GM12878 (cell line): ENCODE measurements at regions of chr6 and their contacts with region 1.

Region 1: GRCh38 chr6:16332175-16332542 is 93.8 kb downstream of the GMPR start:
- DNase-seq: peak; percentile 78
- ATAC-seq: peak; percentile 99
- H3K4me3 ChIP-seq: no peak overlapping the region
- H3K27ac ChIP-seq: peak overlapping the region; percentile 13; the same call in 1 of the 2 replicates
- H3K4me1 ChIP-seq: peaks cover 19% of the 10 kb centered on the region
- H3K27me3 ChIP-seq: no peaks in the 10 kb centered on the region
- CTCF ChIP-seq: peak; percentile 77 to 95 (median 94); a peak in 5 of 6 replicates
- EP300 ChIP-seq: no peak
- POLR2A ChIP-seq: no peak
- RAD21 ChIP-seq: peak; percentile 99

Region 2: DNA sequence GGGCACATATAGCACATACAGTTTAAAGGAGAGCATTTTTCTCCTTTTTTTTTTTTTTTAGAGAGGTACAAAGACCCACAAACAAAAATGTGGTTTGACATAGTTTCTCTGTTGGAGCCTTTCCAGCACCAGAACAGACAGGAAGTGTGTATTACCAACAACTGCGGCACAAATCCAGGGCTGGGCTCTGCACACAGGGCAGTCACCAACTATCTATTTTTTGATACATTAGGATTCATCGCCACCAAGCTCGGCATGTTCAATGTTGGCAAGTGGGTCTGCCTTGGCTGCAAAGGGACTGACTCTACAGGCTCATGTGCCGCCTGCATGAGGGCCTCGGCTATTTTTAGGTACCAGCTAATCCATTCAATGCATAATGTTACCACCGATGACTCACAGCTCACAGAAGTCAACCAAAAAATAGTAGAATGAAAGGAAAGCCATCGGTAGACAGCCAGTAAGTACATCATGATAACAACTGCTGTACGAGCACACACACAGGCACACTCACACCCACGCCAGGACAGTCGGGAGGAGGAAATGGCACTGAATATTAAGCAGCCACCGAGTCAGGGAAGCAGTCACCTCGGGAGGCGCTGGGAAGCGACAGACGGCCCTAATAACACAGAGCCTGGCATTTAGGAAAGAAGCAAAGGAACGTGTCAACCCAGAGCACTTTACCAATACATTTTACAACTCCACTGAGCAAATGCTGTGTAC is 12.2 kb before region 1 on chr6:
- CTCF ChIA-PET with region 1: interaction called, 53 read pairs
- POLR2A ChIA-PET with region 1: no interaction called
- RAD21 ChIA-PET with region 1: interaction called, 5 read pairs
- SMC1A ChIA-PET with region 1: interaction called, 7 read pairs
- in situ Hi-C with region 1: no loop called
- intact Hi-C with region 1: no loop called
- DNase-seq: peak; percentile 59
- ATAC-seq: peak; percentile 90
- H3K4me3 ChIP-seq: peak overlapping the region; percentile 43
- H3K27ac ChIP-seq: peak overlapping the region; percentile 56
- H3K4me1 ChIP-seq: peaks cover 31% of the 10 kb centered on the region
- H3K27me3 ChIP-seq: no peaks in the 10 kb centered on the region
- CTCF ChIP-seq: no peak
- EP300 ChIP-seq: 0 out of 4 replicates have a peak, but pooled peaks of 1 of the 2 experiments have one; percentile 9
- POLR2A ChIP-seq: 0 out of 2 replicates have a peak, but pooled peaks have one; percentile 26
- RAD21 ChIP-seq: no peak

Region 3: DNA sequence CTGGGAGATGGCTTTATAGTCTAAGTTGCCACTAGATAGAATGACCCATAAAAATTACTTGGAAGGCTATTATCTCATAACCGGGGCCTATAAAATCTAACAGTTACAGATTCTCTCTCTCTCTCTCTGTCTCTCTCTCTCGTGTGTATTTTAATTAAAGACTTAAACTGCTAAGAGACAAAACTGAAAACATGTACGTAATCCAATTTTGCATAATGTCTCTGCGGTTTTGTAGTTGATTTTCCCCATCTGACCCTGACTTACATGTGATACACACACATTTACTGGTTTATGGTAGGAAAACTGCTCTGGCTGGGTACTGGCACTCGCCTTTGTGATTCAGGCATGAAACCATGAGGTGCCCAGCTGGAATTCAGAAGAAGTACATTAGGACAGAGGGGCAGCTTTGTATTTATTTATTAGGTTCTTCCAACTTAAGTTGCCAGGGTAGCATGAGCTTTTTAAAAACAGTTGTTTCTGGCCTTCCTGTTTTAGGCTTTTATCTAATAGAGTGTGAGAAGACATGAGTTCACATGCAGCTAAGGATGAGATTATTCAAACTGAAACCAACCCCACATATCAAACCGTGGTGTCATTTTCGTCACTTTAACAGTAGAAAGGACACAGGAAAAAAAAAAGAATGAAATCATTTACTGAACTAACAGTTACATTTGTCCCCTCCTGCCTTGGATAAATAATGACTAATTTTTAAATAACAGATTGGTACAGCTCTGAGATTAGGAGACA is 88.7 kb after region 1 on chr6:
- CTCF ChIA-PET with region 1: interaction called, 41 read pairs
- POLR2A ChIA-PET with region 1: no interaction called
- RAD21 ChIA-PET with region 1: interaction called, 7 read pairs
- SMC1A ChIA-PET with region 1: interaction called, 25 read pairs
- in situ Hi-C with region 1: no loop called
- intact Hi-C with region 1: no loop called
- DNase-seq: peak; percentile 97
- ATAC-seq: peak; percentile 68
- H3K4me3 ChIP-seq: no peak overlapping the region
- H3K27ac ChIP-seq: peak overlapping the region; percentile 98
- H3K4me1 ChIP-seq: peaks cover 36% of the 10 kb centered on the region
- H3K27me3 ChIP-seq: no peaks in the 10 kb centered on the region
- CTCF ChIP-seq: no peak
- EP300 ChIP-seq: peak; percentile 91; a peak in 3 of 4 replicates
- POLR2A ChIP-seq: peak; percentile 48; the same call in 1 of the 2 replicates
- RAD21 ChIP-seq: 0 out of 2 replicates have a peak, but pooled peaks have one; percentile 18

Region 4: DNA sequence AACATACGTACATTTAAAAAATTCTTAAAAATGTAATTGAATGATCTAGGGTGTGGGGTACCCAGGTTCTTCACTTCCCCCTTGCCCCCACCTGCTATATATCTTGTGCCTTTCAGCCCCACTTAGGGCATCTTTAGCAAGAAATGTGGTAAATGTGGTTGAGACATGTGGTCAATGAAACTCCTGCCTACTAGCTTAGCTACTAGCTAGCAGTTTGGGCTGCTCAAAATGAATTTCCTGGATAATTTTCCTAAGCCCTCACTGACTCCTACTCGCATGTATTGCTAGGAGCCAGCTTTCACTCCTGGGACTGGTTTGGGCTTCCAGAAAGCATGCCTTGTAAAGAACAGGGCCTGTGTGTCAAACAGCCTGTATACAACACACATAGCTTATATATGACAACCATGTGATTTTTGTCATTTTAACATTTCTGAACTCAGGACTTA is 171.8 kb after region 1 on chr6:
- CTCF ChIA-PET with region 1: interaction called, 51 read pairs
- POLR2A ChIA-PET with region 1: no interaction called
- RAD21 ChIA-PET with region 1: interaction called, 6 read pairs
- SMC1A ChIA-PET with region 1: interaction called, 3 read pairs
- in situ Hi-C with region 1: no loop called
- intact Hi-C with region 1: loop called (anchors 2 kb)
- DNase-seq: peak; percentile 92
- ATAC-seq: peak; percentile 85
- H3K4me3 ChIP-seq: no peak overlapping the region; the same call in 1 of the 2 replicates
- H3K27ac ChIP-seq: peak overlapping the region; percentile 70
- H3K4me1 ChIP-seq: peaks cover 50% of the 10 kb centered on the region
- H3K27me3 ChIP-seq: no peaks in the 10 kb centered on the region
- CTCF ChIP-seq: no peak
- EP300 ChIP-seq: peak; percentile 85 to 90
- POLR2A ChIP-seq: no peak
- RAD21 ChIP-seq: no peak

Region 5: DNA sequence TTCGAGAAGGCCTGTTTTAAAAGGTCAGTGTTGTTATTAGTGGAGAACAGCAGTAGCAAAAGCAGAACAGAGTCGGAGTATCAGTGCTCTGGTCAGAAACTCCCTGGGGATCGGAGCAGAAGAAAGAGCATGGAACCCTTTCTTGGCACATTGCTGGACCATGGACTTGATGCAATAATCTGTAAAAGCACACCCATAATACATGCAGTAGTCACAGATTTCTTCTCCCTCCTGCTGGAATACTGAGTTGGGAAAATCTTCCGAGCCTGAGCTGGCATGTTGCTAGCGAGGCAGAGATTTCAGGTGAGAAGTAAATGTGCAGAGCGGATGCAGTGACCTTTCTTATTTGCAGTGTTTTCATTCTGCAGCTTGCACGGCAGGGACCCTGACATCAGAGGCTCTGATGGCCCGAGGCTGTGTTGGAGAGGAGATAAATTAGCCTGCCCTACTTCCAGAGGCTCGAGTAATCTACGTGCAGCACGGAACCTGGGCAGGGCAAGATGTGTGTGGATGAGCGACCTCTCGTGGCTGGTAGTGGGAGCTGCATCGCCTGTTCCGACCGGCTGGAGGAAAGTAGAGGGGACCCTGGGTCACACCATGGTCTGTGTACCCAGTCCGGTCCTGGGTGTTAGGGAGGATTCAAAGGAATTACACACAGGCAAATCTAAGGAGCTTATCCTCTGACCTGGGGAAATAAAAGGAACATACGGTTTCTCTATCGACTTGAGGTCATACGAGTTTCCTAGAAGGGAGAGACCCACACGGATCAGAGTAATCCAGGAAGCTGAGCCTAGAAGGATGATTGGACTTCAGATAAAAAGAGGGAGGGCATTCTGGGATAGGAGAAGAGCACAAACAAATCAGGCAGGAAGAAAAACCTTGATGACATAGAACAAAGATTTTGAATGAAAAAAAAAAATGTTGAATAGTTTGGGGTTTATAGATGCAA is 632.7 kb after region 1 on chr6:
- CTCF ChIA-PET with region 1: interaction called, 9 read pairs
- POLR2A ChIA-PET with region 1: no interaction called
- RAD21 ChIA-PET with region 1: interaction called, 4 read pairs
- SMC1A ChIA-PET with region 1: interaction called, 6 read pairs
- in situ Hi-C with region 1: loop called (anchors 5 kb)
- intact Hi-C with region 1: loop called (anchors 5 kb)
- DNase-seq: peak; percentile 12
- ATAC-seq: peak; percentile 99
- H3K4me3 ChIP-seq: no peak overlapping the region
- H3K27ac ChIP-seq: no peak overlapping the region
- H3K4me1 ChIP-seq: no peaks in the 10 kb centered on the region
- H3K27me3 ChIP-seq: no peaks in the 10 kb centered on the region; a peak in 1 of 4 replicates
- CTCF ChIP-seq: peak; percentile 81 to 95 (median 92)
- EP300 ChIP-seq: no peak
- POLR2A ChIP-seq: no peak
- RAD21 ChIP-seq: peak; percentile 85